Posterior cingulate gyrus (tissue), 11 donors: ENCODE measurements at regions of chr7 and their contacts with region 1.

Region 1: DNA sequence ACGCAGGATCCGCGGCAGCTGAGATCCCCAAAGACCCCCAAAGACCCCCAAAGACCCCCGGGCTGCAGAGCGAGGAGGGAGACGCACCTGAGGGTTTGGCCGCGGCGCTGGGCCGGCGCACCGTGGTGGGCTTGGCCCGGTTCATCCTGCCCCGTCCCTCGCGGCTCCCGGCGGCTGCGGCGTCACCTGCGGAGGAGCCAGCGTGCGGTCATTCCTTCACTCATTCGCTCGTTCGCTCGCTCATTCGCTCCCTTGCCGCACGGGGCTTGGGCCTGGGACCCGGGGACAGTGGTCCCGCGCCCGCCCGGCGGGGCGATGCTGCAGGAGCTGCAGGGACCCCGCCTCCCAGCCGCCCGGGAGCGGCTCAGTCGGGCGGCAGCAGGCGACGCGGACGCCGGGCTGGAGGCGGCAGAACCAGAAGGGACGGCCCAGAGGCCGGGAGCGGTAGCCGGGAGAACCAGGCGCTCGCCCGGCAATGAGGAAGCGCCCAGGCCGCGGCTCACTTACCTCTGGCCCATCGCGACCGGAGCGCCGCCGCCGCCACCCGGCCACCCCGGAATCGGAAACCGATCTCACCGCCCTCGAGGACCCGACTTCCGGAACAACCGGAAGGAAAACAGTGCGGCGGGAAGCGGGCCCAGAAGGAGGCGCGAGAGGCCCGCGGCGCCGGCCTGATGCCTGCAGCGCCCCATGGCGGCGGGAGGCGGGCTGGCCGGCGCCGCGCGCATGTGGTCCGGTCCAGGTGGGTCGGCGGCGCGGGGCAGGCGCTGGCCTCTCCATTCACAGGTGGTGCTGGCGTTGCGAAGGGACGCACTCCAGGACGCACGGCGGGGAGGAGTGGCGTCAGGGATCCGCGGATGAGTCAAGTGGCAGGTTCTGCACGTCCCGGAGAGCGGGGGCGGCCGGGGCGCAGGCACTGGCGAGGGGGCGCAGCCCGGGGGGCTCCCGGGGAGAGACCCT is at the start of gene INTS1:
- DNase-seq: peak; percentile 88 to 99 (median 92)

Region 2: DNA sequence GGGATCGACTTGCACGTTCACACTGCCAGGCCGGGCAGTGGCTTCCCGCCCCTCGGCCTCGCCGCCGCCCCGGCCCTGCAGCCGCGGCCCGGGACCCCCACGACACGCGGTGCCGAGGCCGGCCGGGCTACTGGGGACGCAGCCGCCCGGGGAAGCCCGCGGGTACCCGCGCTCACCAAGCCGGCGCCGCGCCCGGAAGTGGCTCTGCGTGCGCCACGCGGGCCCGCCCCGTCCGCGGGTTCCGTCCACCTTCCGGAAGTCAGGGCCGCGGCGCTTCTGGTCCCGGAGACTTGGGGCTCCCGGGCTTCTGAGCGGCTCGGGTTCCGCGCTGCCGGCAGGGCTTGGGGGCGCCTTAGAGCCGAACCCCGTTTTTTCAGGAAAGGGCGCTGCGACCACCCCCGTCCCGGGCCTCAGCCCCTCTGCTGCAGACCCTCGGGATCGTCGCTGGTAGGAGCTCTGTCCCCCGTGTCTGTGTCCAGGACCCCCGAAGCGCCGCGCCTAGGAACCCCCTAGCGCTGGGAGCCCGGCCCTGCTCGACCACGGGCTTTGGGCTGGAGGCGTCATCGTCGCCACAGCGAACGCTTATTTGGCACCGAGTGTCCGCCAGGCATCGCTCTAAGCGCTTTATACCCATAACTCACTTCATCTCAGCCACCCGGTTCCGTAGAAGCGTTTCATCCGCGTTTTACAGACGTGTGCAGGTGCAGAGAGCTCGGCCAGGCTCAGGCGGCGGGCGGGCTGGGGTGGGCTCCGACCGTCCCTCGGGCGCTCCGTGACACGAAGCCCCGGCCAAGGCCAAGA is 65.9 kb after region 1 on chr7 and contains the start of gene PSMG3:
- intact Hi-C with region 1: loop called (anchors 2 kb)
- DNase-seq: peak; percentile 83 to 99 (median 92)